Transverse colon (tissue), 4 donors: ENCODE measurements at regions of chr1 and their contacts with region 1.

Region 1: DNA sequence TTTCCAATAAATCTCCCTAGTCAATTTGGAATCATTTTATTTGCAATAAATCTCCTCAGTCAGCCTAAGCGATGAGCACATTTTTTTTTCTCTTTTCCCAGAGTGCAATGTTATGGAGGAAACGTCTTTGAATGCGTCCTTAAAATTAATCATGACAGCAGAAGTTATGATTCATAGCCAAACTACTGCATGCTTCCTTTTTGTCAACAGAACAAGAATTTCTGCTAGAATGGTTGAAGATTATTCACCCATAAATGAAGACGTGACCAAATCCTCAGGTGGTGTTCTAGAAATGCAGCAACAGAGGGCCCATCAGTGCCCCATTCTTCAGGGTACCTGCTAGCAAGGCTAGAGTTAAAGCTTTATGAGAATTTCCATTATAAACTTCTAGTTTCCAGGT is 407.9 kb upstream of the PKN2 start:
- DNase-seq: no peak
- H3K4me3 ChIP-seq: no peak overlapping the region
- H3K27ac ChIP-seq: no peak overlapping the region
- H3K4me1 ChIP-seq: no peaks in the 10 kb centered on the region
- H3K27me3 ChIP-seq: no peaks in the 10 kb centered on the region
- CTCF ChIP-seq: no peak
- EP300 ChIP-seq: no peak
- POLR2A ChIP-seq: no peak

Region 2: DNA sequence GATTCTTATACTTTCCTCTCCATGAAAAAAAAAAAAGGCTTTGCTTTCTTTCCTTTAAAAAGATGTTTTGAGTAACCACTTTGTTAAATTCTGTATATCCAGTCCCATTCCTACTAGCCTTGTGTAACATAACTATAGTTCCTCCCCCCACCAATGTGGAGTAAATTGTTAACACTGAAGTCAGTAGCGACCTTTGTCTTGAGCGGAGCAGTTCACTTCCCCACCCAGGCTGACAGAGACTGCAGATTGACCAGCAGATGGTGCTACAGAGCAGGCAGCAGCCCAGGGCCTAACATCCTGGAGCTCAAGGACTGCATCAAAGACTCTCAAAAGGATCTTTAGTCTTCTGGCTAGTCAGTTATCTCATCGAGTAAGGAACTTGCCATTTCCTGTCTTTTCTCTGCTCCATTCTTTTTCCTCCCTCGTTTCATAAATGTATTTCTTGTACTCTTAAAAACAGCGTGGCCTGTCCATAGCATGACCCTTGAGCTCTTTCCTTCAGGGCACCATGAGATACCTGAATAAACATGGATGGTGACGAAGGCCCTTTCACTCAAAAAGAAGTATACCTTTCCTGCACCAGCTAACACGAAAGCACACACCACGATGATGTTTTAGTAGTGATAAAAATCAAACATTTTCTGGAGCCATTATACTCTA is 95.6 kb before region 1 on chr1:
- in situ Hi-C with region 1: loop called in 1 of 4 experiments (anchors 25 kb)
- intact Hi-C with region 1: no loop called
- DNase-seq: peak; percentile 83
- H3K4me3 ChIP-seq: no peak overlapping the region
- H3K27ac ChIP-seq: no peak overlapping the region
- H3K4me1 ChIP-seq: peaks cover 0 to 8% (median 0%) of the 10 kb centered on the region in 4 donors
- H3K27me3 ChIP-seq: no peaks in the 10 kb centered on the region
- CTCF ChIP-seq: peak; percentile 78 to 91 (median 86)
- EP300 ChIP-seq: no peak
- POLR2A ChIP-seq: no peak

Region 3: DNA sequence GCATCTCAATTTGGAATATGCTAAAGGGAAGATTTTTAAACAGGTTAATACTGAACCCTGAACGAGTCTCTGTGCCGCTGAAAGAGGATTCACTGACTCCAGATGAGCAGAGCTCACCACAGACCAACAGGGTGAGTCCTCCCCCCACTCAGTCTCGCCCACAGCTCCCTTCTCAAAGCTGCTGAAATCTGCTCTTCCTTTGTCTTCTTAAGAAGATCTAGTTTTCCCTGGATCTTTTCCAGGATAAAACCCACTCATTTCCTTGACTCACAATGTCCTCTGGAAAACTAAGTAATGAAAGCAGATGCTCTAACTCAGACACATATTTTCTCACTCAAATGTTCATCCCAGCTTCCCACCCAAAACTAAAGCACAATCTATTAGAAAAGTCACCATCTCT is 39.1 kb before region 1 on chr1:
- in situ Hi-C with region 1: no loop called
- intact Hi-C with region 1: no loop called
- DNase-seq: no peak
- H3K4me3 ChIP-seq: no peak overlapping the region
- H3K27ac ChIP-seq: no peak overlapping the region
- H3K4me1 ChIP-seq: no peaks in the 10 kb centered on the region
- H3K27me3 ChIP-seq: no peaks in the 10 kb centered on the region
- CTCF ChIP-seq: no peak
- EP300 ChIP-seq: no peak
- POLR2A ChIP-seq: no peak